ENCODE measurements at regions of chr15 and their contacts with region 1.

Region 1: DNA sequence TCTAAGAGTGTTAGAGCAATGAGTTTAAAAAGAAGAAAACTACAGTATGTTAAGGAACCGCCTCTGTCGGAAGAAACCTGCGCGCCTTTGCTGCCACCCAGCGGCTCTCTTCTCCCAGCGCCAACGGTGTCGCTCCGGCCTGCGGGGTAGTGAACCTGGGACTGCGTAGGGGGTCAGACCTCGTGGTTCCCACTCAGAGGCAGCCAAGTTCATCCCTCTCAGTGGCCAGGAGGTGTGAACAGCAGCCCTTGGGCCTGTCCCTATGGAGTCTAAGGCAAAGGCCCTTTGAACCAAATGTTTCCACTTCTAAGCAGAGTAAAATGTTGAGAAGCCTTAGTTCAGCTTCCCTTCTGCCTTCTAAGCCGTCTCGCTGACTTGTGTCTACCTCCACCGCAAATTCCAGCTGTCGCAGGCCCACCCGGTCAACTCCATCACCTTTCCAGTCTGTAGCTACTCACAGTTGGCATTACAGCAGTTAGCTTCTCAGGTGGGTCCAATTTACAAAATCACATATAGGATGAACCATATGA is 980 bp upstream of the RAB27A start:
- DNase-seq: peak; percentile 83
- H3K4me3 ChIP-seq: peak overlapping the region; percentile 85
- H3K27ac ChIP-seq: no peak overlapping the region
- H3K4me1 ChIP-seq: peaks cover 8% of the 10 kb centered on the region
- CTCF ChIP-seq: peak; percentile 95

Region 2: DNA sequence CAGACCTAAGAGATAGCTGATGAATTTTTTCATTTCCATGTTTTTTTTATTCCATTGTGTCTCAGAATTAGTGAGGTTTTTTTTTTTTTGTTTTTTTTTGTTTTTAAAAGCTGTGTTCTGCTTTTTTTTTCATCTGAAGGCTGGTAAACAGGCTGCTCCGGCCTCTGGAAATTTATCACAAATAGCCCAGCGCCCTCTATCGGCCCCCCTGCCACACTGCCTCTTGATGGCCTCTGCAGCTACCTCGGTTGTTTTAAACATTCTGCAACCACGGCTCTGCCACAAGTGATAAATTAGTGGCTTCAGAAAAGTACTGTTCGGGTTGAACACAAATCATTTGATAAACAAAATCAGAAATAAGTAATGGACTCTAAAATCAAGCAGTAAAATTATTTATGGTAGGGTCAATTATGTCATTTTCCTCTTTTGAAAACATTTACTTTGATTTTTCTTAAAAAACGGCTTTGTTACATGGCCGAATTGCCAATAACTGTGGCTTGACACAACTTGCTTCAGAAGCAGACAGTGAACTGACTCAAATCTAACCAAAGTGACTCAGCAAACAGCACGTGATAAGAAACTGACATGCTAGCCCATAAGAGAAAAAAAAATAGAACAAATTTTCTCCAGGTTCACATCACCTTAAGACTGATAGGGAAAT is 181.6 kb before region 1 on chr15:
- CTCF ChIA-PET with region 1: no interaction called
- POLR2A ChIA-PET with region 1: no interaction called
- intact Hi-C with region 1: loop called (anchors 5 kb)
- DNase-seq: peak; percentile 58
- H3K4me3 ChIP-seq: no peak overlapping the region
- H3K27ac ChIP-seq: no peak overlapping the region
- H3K4me1 ChIP-seq: no peaks in the 10 kb centered on the region
- CTCF ChIP-seq: peak; percentile 94

Region 3: DNA sequence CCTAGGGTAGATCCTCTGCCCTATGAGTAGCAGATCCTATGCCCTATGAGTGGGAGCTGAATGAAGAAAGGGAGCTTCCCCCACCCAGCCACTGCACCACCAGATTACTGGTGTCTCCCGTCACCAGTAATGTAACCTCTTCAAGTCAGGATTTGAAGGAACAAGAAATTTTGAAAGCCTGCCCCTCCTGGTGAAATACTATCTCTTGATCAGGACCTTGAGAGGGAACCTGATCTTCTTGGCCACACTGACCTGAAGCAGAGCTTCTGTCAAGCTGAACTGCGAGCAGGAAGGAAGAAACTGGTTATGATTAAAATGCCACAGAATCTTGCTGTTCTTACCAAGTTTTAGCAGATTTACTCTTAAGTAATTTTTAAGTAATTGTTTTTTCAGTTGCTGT is 156.6 kb before region 1 on chr15:
- CTCF ChIA-PET with region 1: no interaction called
- POLR2A ChIA-PET with region 1: no interaction called
- intact Hi-C with region 1: no loop called
- DNase-seq: no peak
- H3K4me3 ChIP-seq: no peak overlapping the region
- H3K27ac ChIP-seq: no peak overlapping the region
- H3K4me1 ChIP-seq: no peaks in the 10 kb centered on the region
- CTCF ChIP-seq: no peak

Region 4: GRCh38 chr15:55196458-55197361 is 93.9 kb before region 1 on chr15 and contains the start of gene RSL24D1:
- CTCF ChIA-PET with region 1: no interaction called
- POLR2A ChIA-PET with region 1: no interaction called
- intact Hi-C with region 1: loop called (anchors 5 kb)
- DNase-seq: peak; percentile 99
- H3K4me3 ChIP-seq: peak within 1 kb of the TSS; percentile 98
- H3K27ac ChIP-seq: peak within 1 kb of the TSS; percentile 96
- H3K4me1 ChIP-seq: peaks cover 33% of the 10 kb centered on the region
- CTCF ChIP-seq: peak; percentile 67
- total RNA-seq, gene RSL24D1: 117 and 118 TPM in 2 replicates

Region 5: DNA sequence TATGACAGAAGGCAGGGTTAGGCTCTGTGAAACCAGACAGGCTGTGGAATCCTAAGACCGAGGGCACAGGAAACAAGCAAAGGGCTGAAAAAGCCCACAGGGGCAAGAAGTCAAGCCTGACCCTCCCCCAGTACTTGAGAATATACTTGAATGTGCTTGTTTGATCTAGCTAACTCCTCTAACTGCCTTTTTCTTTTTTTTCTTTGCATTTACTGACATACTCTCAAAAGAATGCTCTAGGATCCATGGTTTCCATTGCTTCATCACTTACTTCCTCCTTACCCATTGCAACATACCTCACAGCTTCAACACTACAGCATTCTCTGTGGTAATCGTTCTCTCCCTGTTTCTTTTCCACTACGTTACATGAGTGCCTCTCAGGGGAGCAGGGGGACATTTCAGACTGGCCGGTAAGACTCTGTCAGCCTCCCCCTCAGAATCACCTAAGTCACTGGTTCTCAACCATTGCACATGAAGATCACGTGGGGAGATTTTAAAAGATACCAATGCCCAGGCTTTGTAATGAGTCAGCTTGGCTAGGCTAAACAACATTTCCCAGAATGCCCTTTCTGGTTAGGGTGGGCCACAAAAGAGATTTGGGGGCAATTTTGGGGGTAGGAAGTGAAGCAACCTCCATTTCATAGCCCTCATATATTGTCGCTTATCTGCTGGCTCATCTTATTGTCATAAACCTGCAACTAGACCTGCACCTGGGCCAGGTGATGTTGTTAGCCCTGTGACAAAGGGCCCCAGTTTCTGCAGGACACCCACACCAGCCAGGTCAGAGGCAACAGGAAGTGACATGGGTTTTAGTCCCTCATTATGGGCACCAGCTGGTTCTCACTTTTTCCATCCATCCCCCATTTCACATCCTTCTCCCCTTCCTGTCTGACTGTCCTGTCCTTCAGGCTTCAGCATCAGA is 69.2 kb before region 1 on chr15:
- CTCF ChIA-PET with region 1: no interaction called
- POLR2A ChIA-PET with region 1: interaction called, 6 read pairs
- intact Hi-C with region 1: loop called (anchors 1 kb)
- DNase-seq: peak; percentile 51
- H3K4me3 ChIP-seq: no peak overlapping the region
- H3K27ac ChIP-seq: peak overlapping the region; percentile 17
- H3K4me1 ChIP-seq: peaks cover 34% of the 10 kb centered on the region
- CTCF ChIP-seq: no peak

Region 6: GRCh38 chr15:55434989-55435825 is 144.6 kb after region 1 on chr15:
- CTCF ChIA-PET with region 1: interaction called, 6 read pairs
- POLR2A ChIA-PET with region 1: no interaction called
- intact Hi-C with region 1: loop called (anchors 1 kb)
- DNase-seq: peak; percentile 63
- H3K4me3 ChIP-seq: no peak overlapping the region
- H3K27ac ChIP-seq: no peak overlapping the region
- H3K4me1 ChIP-seq: no peaks in the 10 kb centered on the region
- CTCF ChIP-seq: peak; percentile 85